Endothelial cell of umbilical vein (primary cell): ENCODE measurements at regions of chr10 and their contacts with region 1.

Region 1: GRCh38 chr10:61733358-61733940 is 70.7 kb downstream of the CABCOCO1 start:
- DNase-seq: peak; percentile 68
- H3K4me3 ChIP-seq: no peak overlapping the region
- H3K27ac ChIP-seq: no peak overlapping the region
- H3K4me1 ChIP-seq: peaks cover 3% of the 10 kb centered on the region
- H3K27me3 ChIP-seq: no peaks in the 10 kb centered on the region
- CTCF ChIP-seq: peak; percentile 44 to 49
- POLR2A ChIP-seq: no peak

Region 2: DNA sequence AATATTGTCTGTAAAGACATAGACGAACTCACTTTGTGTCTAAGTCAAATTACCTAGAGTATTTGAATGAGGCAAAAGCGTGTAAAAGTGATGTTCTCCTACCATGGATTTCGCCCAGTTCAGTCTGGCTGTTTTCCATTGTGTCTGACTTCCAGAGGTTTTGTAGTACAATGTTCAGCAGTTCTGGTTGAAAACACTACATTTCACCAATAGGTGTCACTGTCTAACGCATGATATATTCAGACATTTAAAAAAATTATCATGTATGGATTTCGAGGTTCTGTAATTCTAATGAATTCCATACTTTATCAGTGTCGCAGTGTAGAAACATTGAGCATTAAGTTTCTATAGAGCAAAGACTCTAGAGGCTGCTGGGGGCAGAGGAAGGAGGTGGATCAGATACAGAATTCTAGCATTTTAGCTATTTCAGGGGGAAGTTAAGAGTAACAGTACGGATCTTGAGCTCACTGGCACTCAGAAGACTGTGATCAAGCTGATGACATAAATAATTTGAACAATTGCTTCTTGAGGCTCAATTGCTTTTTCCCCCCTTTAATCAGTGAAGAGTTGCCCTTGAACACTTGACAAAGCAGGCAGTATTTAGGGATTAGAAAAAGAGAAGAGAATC is 592.6 kb before region 1 on chr10:
- CTCF ChIA-PET with region 1: interaction called, 23 read pairs
- POLR2A ChIA-PET with region 1: no interaction called
- dilution Hi-C with region 1: no loop called
- intact Hi-C with region 1: loop called (anchors 2 kb)
- DNase-seq: peak; percentile 88
- H3K4me3 ChIP-seq: no peak overlapping the region
- H3K27ac ChIP-seq: peak overlapping the region; percentile 12
- H3K4me1 ChIP-seq: peaks cover 21% of the 10 kb centered on the region
- H3K27me3 ChIP-seq: no peaks in the 10 kb centered on the region
- CTCF ChIP-seq: peak; percentile 51 to 55
- POLR2A ChIP-seq: no peak

Region 3: GRCh38 chr10:61284222-61284890 is 449.1 kb before region 1 on chr10:
- CTCF ChIA-PET with region 1: interaction called, 4 read pairs
- POLR2A ChIA-PET with region 1: no interaction called
- dilution Hi-C with region 1: no loop called
- intact Hi-C with region 1: loop called (anchors 1 kb)
- DNase-seq: peak; percentile 83
- H3K4me3 ChIP-seq: no peak overlapping the region
- H3K27ac ChIP-seq: no peak overlapping the region
- H3K4me1 ChIP-seq: peaks cover 12% of the 10 kb centered on the region
- H3K27me3 ChIP-seq: no peaks in the 10 kb centered on the region
- CTCF ChIP-seq: peak; percentile 39 to 48
- POLR2A ChIP-seq: no peak

Region 4: DNA sequence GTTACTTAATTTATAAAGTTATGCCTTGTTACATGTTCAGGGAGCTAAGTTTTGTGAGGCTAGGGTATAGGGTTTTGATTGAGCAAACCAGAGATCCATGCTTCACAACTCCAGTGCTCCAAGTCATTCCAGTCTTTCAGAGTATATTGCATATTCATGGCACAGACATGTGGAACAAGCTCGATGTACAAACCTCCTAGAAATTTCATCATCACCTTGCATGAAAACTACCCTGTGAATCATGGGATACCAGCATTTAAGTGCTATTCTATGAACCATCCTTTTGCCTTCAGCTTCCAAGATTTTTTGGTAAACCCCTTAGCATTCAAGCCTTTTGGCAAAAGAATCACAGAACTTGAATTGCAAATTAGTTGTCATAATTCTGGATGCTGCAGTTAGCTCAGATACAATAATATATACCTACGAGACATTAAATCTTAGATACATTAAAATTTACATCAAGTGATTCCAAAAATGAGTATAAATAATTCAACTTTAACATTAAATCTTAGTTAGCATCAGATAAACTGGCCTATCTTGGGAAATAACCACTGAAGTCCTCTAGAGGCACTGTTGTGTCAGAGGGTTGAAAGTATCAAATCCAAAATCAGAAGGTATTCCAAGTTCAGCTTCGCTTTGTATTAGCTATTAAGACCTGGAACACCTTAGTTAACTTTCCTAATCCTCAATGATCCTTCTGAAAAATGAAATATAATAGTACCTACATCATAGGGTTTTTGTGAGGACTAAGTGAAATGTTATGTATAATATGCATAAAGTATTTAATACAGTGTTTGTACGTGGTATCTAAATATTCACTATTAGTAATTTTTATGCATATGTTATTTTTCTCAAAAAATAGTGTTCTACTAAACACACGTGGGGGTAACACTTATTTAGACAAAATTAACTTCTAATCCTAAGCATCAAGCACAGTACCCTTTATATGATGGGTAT is 126.2 kb before region 1 on chr10:
- CTCF ChIA-PET with region 1: interaction called, 16 read pairs
- POLR2A ChIA-PET with region 1: no interaction called
- dilution Hi-C with region 1: no loop called
- intact Hi-C with region 1: loop called (anchors 1 kb)
- DNase-seq: peak; percentile 19
- H3K4me3 ChIP-seq: no peak overlapping the region
- H3K27ac ChIP-seq: no peak overlapping the region
- H3K4me1 ChIP-seq: peaks cover 2% of the 10 kb centered on the region
- H3K27me3 ChIP-seq: no peaks in the 10 kb centered on the region
- CTCF ChIP-seq: peak; percentile 25 to 32
- POLR2A ChIP-seq: no peak

Region 5: GRCh38 chr10:61744469-61744868 is 11.0 kb after region 1 on chr10:
- CTCF ChIA-PET with region 1: interaction called, 10 read pairs
- POLR2A ChIA-PET with region 1: no interaction called
- dilution Hi-C with region 1: no loop called
- intact Hi-C with region 1: no loop called
- DNase-seq: no peak
- H3K4me3 ChIP-seq: no peak overlapping the region
- H3K27ac ChIP-seq: no peak overlapping the region
- H3K4me1 ChIP-seq: no peaks in the 10 kb centered on the region
- H3K27me3 ChIP-seq: no peaks in the 10 kb centered on the region
- CTCF ChIP-seq: no peak
- POLR2A ChIP-seq: no peak